Caco-2 (cell line): ENCODE measurements at regions of chr10 and their contacts with region 1.

Region 1: DNA sequence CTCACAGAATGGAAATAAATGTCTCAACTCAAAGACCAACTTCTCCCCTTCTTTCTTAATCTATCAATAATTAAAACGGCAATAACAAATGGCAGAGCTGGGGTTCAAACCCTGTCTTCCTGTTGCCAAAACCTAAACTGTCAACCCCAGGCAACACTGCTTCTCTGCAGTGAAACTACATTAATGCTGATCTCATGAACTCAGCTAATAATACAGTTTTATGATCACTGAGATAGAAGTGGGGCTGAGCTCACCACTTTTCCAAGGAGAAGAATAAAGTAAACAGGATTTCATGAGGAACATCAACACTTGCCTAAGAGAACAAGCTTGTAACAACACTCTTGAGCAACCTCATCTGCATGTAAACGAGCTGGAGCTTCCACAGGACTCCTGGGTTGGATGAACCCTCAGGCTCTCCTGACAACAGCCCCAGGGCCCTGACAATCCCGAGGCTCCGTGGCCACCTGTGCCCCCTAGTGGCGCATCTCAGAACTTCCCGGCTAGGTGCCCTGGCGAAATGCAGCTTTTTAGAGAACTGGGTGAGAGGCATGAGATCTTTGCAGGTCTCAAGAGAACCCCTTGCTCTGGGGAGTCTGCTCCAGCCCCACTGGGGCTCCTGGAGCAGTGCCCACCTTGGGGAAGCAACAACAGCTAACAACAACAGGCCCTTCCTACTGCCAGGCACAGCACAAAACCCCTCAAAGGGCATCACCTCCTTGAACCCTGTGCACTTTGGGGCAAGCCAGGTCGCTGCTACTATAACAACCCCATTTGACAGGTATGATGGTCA is 169.3 kb downstream of the SH3PXD2A start:
- DNase-seq: peak; percentile 78 to 87
- H3K4me3 ChIP-seq: no peak overlapping the region
- H3K4me3 Mint-ChIP-seq: no peak overlapping the region
- H3K27ac Mint-ChIP-seq: no peak overlapping the region
- H3K4me1 ChIP-seq: peaks cover 25% of the 10 kb centered on the region
- H3K4me1 Mint-ChIP-seq: peaks cover 16% of the 10 kb centered on the region
- H3K27me3 ChIP-seq: no peaks in the 10 kb centered on the region
- H3K27me3 Mint-ChIP-seq: no peaks in the 10 kb centered on the region
- CTCF ChIP-seq: peak; percentile 96 to 98

Region 2: GRCh38 chr10:103598654-103599115 is 87.4 kb before region 1 on chr10:
- CTCF ChIA-PET with region 1: interaction called, 33 read pairs
- POLR2A ChIA-PET with region 1: no interaction called
- intact Hi-C with region 1: loop called (anchors 1 kb)
- DNase-seq: peak; percentile 79 to 80
- H3K4me3 ChIP-seq: no peak overlapping the region
- H3K4me3 Mint-ChIP-seq: no peak overlapping the region
- H3K27ac Mint-ChIP-seq: no peak overlapping the region
- H3K4me1 ChIP-seq: no peaks in the 10 kb centered on the region
- H3K4me1 Mint-ChIP-seq: peaks cover 7% of the 10 kb centered on the region
- H3K27me3 ChIP-seq: no peaks in the 10 kb centered on the region
- H3K27me3 Mint-ChIP-seq: no peaks in the 10 kb centered on the region
- CTCF ChIP-seq: peak; percentile 76 to 82

Region 3: GRCh38 chr10:103605359-103606095 is 80.5 kb before region 1 on chr10:
- CTCF ChIA-PET with region 1: interaction called, 12 read pairs
- POLR2A ChIA-PET with region 1: no interaction called
- intact Hi-C with region 1: loop called (anchors 1 kb)
- DNase-seq: peak in 1 of 2 experiments; percentile 59
- H3K4me3 ChIP-seq: no peak overlapping the region
- H3K4me3 Mint-ChIP-seq: no peak overlapping the region
- H3K27ac Mint-ChIP-seq: no peak overlapping the region
- H3K4me1 ChIP-seq: no peaks in the 10 kb centered on the region
- H3K4me1 Mint-ChIP-seq: no peaks in the 10 kb centered on the region
- H3K27me3 ChIP-seq: no peaks in the 10 kb centered on the region
- H3K27me3 Mint-ChIP-seq: no peaks in the 10 kb centered on the region
- CTCF ChIP-seq: peak; percentile 47 to 64

Region 4: DNA sequence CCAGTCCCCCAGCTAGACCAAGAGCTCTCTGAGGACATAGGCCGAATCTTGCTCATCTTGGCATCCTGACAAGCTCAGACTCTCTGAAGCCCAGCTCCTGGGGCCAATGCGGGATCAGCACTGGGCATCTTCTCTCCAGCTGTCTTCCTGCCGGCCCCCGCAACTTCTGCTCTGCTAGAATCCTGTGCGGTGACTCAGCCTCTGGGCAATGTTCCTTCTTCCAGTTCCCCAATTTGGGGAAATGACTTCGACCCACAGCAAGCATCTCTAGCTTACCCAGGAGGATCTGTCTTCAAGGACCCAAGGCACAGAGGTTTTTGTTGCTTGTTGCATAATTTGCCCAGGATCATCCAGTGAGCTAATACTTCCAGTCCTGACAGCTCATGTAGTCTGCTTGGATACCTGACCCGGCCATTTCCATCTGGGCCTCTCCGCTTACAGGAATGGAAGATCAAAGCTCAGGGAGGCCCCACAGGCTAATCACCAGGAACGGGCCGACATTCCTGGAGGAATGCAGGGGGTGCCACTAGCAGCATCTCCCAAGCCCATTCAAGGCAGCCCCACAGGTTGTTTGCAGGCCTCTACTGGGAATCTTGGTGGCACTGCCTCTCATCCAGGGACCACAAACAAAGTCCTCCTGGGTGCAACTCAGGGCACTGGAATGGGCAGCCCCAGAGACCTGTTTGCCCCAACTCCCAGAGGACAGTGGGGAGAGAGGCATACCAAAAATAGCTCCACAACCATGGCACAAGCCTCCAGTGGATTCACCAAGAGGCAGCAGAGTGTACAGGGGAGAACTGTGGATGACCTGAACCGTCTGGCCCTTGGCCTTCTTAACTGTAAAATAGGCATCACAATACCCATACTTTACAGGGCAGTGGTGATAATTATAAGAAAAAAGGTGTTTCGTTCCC is 40.7 kb before region 1 on chr10:
- CTCF ChIA-PET with region 1: interaction called, 9 read pairs
- POLR2A ChIA-PET with region 1: no interaction called
- intact Hi-C with region 1: loop called (anchors 5 kb)
- DNase-seq: peak; percentile 66 to 85
- H3K4me3 ChIP-seq: no peak overlapping the region
- H3K4me3 Mint-ChIP-seq: no peak overlapping the region
- H3K27ac Mint-ChIP-seq: peak overlapping the region; percentile 83
- H3K4me1 ChIP-seq: peaks cover 28% of the 10 kb centered on the region
- H3K4me1 Mint-ChIP-seq: peaks cover 15% of the 10 kb centered on the region
- H3K27me3 ChIP-seq: no peaks in the 10 kb centered on the region
- H3K27me3 Mint-ChIP-seq: no peaks in the 10 kb centered on the region
- CTCF ChIP-seq: no peak

Region 5: GRCh38 chr10:103666087-103666761 is 19.9 kb before region 1 on chr10:
- CTCF ChIA-PET with region 1: interaction called, 17 read pairs
- POLR2A ChIA-PET with region 1: no interaction called
- intact Hi-C with region 1: no loop called
- DNase-seq: no peak
- H3K4me3 ChIP-seq: no peak overlapping the region
- H3K4me3 Mint-ChIP-seq: no peak overlapping the region
- H3K27ac Mint-ChIP-seq: no peak overlapping the region
- H3K4me1 ChIP-seq: peaks cover 11% of the 10 kb centered on the region
- H3K4me1 Mint-ChIP-seq: no peaks in the 10 kb centered on the region
- H3K27me3 ChIP-seq: no peaks in the 10 kb centered on the region
- H3K27me3 Mint-ChIP-seq: no peaks in the 10 kb centered on the region
- CTCF ChIP-seq: peak in 1 of 2 experiments; percentile 21